Activated CD4-positive, alpha-beta T cell treated with anti-CD3 and anti-CD28 coated beads for 36 hours (primary cell): ENCODE measurements at regions of chr3 and their contacts with region 1.

Region 1: DNA sequence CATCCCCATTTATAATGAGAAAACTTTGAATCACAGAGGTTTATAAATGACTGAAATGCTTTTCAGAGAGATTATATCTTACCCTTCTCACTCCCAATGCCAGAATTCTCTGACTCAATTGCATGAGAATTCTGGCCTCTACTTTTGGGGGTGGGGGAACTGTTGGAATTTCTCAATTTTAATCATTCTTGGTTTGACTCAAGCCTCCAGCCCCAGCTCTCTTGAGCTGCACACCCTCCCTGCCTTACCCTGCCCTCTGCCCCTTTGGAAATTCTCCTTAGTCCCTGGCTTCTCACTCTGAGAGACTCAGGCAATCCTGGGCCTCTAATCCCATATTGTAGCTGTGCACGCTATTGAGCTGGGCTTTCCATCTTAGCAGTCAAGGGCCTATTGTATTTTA is 44.2 kb downstream of the ZNF589 start:
- DNase-seq: no peak
- ATAC-seq: peak; percentile 44
- H3K4me3 Mint-ChIP-seq: no peak overlapping the region
- H3K27ac Mint-ChIP-seq: no peak overlapping the region
- H3K4me1 Mint-ChIP-seq: peaks cover 5% of the 10 kb centered on the region
- H3K27me3 Mint-ChIP-seq: no peaks in the 10 kb centered on the region

Region 2: DNA sequence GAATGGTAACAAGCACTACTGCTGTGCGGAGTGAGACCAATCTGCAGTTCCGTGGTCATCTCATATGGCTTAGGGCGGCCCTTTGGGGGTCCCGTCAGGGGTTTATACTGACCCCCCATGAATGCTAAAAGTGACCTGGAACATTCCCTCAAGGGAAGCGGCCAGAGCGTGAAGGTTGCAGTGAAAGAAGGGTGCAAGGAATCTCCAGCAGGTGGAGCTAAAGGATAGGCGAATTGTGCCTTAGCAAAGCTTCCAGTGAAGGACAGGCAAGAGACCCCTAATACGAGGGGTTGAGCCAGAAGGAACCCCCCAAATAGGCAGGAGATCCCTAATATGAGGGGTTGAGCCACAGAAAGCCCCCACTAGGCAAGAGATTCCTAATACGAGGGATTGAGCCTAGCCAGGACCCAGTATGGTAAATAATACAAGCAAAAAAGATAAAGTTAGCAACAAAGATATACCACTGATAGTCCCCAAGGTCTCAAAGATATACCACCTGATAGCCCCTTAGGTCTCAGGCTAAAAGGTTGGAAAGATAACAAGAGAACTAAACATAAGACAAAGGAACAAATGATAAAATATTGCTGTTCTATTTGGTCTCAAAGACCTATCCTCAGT is 11.4 kb before region 1 on chr3:
- CTCF ChIA-PET with region 1: interaction called, 5 read pairs
- POLR2A ChIA-PET with region 1: interaction called, 11 read pairs
- intact Hi-C with region 1: no loop called
- DNase-seq: peak; percentile 68
- ATAC-seq: no peak
- H3K4me3 Mint-ChIP-seq: no peak overlapping the region
- H3K27ac Mint-ChIP-seq: no peak overlapping the region
- H3K4me1 Mint-ChIP-seq: peaks cover 22% of the 10 kb centered on the region
- H3K27me3 Mint-ChIP-seq: no peaks in the 10 kb centered on the region